ENCODE measurements at regions of chr17 and their contacts with region 1.

Region 1: GRCh38 chr17:27236717-27237315 is 57.1 kb upstream of the WSB1 start:
- DNase-seq: peak; percentile 55 to 83 (median 75)
- ATAC-seq: peak; percentile 92
- H3K4me3 ChIP-seq: no peak overlapping the region
- H3K4me3 Mint-ChIP-seq: no peak overlapping the region
- H3K27ac ChIP-seq: no peak overlapping the region
- H3K27ac Mint-ChIP-seq: no peak overlapping the region
- H3K4me1 ChIP-seq: no peaks in the 10 kb centered on the region
- H3K4me1 Mint-ChIP-seq: no peaks in the 10 kb centered on the region
- H3K27me3 ChIP-seq: no peaks in the 10 kb centered on the region
- H3K27me3 Mint-ChIP-seq: peaks cover 3% of the 10 kb centered on the region
- CTCF ChIP-seq: peak; percentile 94

Region 2: GRCh38 chr17:27293898-27294688 is 57.3 kb after region 1 on chr17 and contains the start of gene WSB1:
- CTCF ChIA-PET with region 1: interaction called, 14 read pairs
- POLR2A ChIA-PET with region 1: interaction called, 9 read pairs
- intact Hi-C with region 1: loop called in 1 of 2 experiments (anchors 5 kb)
- DNase-seq: peak; percentile 86 to 97 (median 92)
- ATAC-seq: peak; percentile 84
- H3K4me3 ChIP-seq: peak within 1 kb of the TSS; percentile 89 to 99
- H3K4me3 Mint-ChIP-seq: peak within 1 kb of the TSS; percentile 93
- H3K27ac ChIP-seq: peak within 1 kb of the TSS; percentile 98 to 99
- H3K27ac Mint-ChIP-seq: peak within 1 kb of the TSS; percentile 100
- H3K4me1 ChIP-seq: peaks cover 27% of the 10 kb centered on the region
- H3K4me1 Mint-ChIP-seq: peaks cover 36% of the 10 kb centered on the region
- H3K27me3 ChIP-seq: no peaks in the 10 kb centered on the region
- H3K27me3 Mint-ChIP-seq: no peaks in the 10 kb centered on the region
- CTCF ChIP-seq: no peak
- total RNA-seq, gene WSB1: 89.0 to 91.1 TPM

Region 3: DNA sequence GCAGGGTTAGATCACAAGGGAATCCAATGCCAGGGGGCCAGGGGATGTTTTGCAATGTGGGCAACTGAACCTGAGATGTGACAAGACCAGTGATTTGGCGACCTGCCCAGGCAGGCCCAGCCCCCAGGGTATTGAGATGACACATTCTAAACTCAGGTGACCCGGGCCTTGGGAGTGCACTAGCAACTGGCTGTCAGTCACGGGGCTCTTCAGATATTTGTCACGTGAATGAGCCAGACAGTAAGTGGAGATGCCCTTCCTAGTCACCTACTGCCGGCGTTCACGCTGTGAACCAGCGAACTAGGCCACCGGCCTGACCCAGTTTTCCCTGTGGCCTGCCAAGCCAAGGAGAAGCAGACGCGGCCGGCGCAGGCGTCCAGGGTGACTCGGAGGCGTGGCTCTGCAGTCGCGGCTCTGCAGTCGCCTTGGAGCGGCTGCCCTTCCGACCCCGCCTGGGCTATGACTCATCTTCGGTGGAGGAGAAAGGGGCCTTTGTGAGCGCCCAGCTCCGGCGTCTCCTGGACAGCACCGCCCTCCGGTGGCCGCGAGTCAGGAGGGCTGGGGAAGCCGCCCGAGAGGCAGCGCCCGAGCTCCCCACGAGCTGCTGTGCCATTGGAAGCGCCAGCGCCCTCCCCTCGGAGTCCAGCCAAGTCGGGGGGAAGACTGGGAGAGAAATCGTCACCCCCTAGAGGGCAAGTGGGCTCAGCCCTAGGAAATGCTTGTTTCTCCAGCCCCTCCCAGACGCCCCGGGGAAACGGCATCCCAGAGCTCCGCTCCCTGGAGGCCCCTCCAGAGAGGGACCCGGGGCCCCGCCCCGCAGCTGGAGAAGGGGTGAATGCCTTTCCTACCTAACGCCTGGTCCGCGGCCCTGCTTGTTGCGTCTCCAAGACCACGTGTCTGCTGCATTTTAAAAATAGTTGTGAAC is 95.9 kb after region 1 on chr17:
- CTCF ChIA-PET with region 1: interaction called, 108 read pairs
- POLR2A ChIA-PET with region 1: interaction called, 12 read pairs
- intact Hi-C with region 1: loop called (anchors 1 kb)
- DNase-seq: peak; percentile 76 to 93 (median 91)
- ATAC-seq: peak; percentile 80
- H3K4me3 ChIP-seq: peak overlapping the region; percentile 52 to 58
- H3K4me3 Mint-ChIP-seq: peak overlapping the region; percentile 79
- H3K27ac ChIP-seq: peak overlapping the region; percentile 21 to 84
- H3K27ac Mint-ChIP-seq: peak overlapping the region; percentile 88
- H3K4me1 ChIP-seq: peaks cover 13% of the 10 kb centered on the region
- H3K4me1 Mint-ChIP-seq: peaks cover 16% of the 10 kb centered on the region
- H3K27me3 ChIP-seq: no peaks in the 10 kb centered on the region
- H3K27me3 Mint-ChIP-seq: no peaks in the 10 kb centered on the region
- CTCF ChIP-seq: peak; percentile 54

Region 4: DNA sequence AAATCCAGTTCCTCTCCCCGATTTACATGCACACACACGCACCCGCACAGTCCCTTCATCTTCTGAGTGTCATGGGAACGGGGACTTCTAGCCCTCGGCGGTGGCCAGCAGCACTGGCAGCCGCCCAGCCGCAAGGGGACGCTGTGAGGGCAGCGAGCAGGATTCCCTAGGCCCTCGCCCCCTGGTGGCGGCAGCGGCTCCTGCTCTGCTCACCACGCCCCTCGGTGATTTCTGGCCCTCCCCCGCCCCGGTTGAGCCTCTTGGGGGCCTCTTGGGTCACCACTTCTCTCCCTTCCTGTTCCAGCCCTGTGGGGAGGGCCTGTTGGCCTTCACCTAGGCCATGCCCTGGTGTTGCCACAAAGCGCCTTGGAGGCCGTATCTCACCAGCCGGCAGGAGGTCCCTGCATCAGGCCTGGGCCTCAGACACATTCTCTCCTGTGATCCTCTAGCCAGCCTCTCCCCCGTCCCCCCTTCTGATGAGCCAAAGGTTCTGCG is 144.2 kb after region 1 on chr17:
- CTCF ChIA-PET with region 1: interaction called, 8 read pairs
- POLR2A ChIA-PET with region 1: no interaction called
- intact Hi-C with region 1: loop called in 1 of 2 experiments (anchors 2 kb)
- DNase-seq: peak; percentile 47 to 84 (median 74)
- ATAC-seq: peak; percentile 98
- H3K4me3 ChIP-seq: no peak overlapping the region
- H3K4me3 Mint-ChIP-seq: no peak overlapping the region
- H3K27ac ChIP-seq: no peak overlapping the region
- H3K27ac Mint-ChIP-seq: no peak overlapping the region
- H3K4me1 ChIP-seq: no peaks in the 10 kb centered on the region
- H3K4me1 Mint-ChIP-seq: peaks cover 4% of the 10 kb centered on the region
- H3K27me3 ChIP-seq: no peaks in the 10 kb centered on the region
- H3K27me3 Mint-ChIP-seq: peaks cover 23% of the 10 kb centered on the region
- CTCF ChIP-seq: peak; percentile 84

Region 5: GRCh38 chr17:27455914-27456680 is 219.3 kb after region 1 on chr17 and contains the start of gene KSR1:
- CTCF ChIA-PET with region 1: interaction called, 4 read pairs
- POLR2A ChIA-PET with region 1: no interaction called
- intact Hi-C with region 1: loop called (anchors 5 kb)
- DNase-seq: peak; percentile 45 to 90 (median 79)
- ATAC-seq: peak; percentile 92
- H3K4me3 ChIP-seq: peak within 1 kb of the TSS; percentile 70 to 89
- H3K4me3 Mint-ChIP-seq: peak within 1 kb of the TSS; percentile 90
- H3K27ac ChIP-seq: peak within 1 kb of the TSS; percentile 54 to 56
- H3K27ac Mint-ChIP-seq: peak within 1 kb of the TSS; percentile 38
- H3K4me1 ChIP-seq: peaks cover 19% of the 10 kb centered on the region
- H3K4me1 Mint-ChIP-seq: peaks cover 27% of the 10 kb centered on the region
- H3K27me3 ChIP-seq: no peaks in the 10 kb centered on the region
- H3K27me3 Mint-ChIP-seq: no peaks in the 10 kb centered on the region
- CTCF ChIP-seq: peak; percentile 40
- total RNA-seq, gene KSR1: 23.3 to 25.6 TPM